Activated CD4-positive, alpha-beta T cell treated with anti-CD3 and anti-CD28 coated beads, Interleukin-2, amount 10 ng/mL, durations not matched to agents 24 days and 14 days (primary cell): ENCODE measurements at regions of chr2 and their contacts with region 1.

Region 1: DNA sequence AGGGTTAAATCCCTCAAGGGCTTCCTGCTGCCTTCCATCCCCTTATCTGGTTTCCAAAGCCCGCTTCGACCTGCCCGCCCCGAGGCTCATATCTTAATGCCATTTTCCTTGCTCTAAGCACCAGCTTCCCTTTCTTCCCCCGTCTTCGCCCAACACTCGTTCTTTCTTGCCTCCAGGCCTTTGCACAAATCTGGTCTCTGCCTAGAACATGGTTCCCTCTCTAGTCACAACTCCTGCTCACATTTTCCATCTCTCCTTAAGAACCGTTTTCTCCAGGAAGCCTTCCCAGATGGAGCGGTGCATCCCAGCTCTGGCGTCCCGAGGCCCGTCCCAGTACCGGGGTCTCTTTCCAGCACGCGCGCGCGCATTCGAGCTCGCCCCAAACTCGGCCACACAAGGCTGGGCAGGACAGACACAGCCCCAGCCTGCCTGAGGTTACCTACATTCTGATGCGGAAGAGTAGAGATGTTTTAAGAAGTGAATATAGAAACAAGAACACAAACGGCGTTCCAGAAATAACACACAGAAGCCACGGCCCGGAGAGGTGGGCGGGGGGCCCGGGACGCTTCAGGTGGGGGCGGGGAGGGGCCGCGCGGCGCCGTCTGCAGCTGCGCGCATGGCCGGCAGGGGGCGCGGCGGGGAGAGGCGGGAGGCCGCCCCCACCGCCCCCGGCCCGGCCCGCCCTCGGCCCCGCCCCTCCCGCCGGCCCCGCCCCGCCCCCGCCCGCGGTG is at the start of gene DGKD:
- DNase-seq: peak; percentile 89
- H3K4me3 Mint-ChIP-seq: peak within 1 kb of the TSS; percentile 87
- H3K27ac Mint-ChIP-seq: peak within 1 kb of the TSS; percentile 86
- H3K4me1 Mint-ChIP-seq: peaks cover 63% of the 10 kb centered on the region
- H3K27me3 Mint-ChIP-seq: no peaks in the 10 kb centered on the region
- total RNA-seq, gene DGKD: 49.1 and 52.8 TPM in 2 replicates

Region 2: DNA sequence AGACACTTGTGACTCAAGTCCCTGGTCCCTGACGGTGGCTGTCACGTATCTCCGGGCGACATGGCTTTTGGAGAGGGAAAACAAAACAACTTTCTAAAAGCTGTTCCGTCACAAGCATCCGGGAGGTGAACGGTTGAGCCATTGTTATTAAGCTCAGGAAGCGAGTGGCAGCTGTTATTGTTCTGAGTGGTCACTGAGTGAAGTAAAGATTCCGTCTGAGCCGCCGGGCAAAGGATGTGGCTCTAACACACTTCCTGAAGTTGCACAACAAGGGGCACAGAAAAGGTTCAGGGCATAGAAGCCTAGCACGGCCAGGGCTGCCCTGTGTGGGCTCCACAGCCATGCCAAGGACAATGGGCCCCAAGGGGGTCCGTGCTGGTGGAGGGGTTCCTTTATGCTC is 269.4 kb before region 1 on chr2:
- intact Hi-C with region 1: loop called (anchors 10 kb)
- DNase-seq: peak; percentile 83
- H3K4me3 Mint-ChIP-seq: peak overlapping the region; percentile 64
- H3K27ac Mint-ChIP-seq: peak overlapping the region; percentile 82
- H3K4me1 Mint-ChIP-seq: peaks cover 69% of the 10 kb centered on the region
- H3K27me3 Mint-ChIP-seq: no peaks in the 10 kb centered on the region

Region 3: DNA sequence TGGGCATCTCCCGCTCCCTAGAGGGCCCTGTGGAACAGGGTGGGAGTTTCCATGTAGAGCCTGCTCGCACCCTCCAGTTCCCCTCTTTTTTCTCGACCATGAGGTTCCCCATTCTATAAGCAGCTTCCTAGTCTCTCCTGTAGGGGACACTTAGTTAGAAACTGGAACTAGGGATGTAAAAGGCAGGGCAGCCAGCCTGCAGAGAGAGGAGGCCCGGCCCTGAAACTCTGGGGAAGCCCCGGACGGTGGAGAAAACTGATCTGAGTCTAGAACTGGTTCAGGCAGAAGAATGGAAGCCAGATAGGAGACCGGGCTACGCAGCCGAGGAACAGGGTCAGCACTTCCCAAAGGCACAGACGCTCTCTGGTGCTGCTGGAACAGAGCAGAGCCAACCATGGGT is 154.1 kb before region 1 on chr2:
- intact Hi-C with region 1: no loop called
- DNase-seq: no peak
- H3K4me3 Mint-ChIP-seq: no peak overlapping the region
- H3K27ac Mint-ChIP-seq: peak overlapping the region; percentile 63
- H3K4me1 Mint-ChIP-seq: no peaks in the 10 kb centered on the region
- H3K27me3 Mint-ChIP-seq: no peaks in the 10 kb centered on the region

Region 4: GRCh38 chr2:233267516-233268245 is 86.3 kb before region 1 on chr2:
- intact Hi-C with region 1: loop called (anchors 5 kb)
- DNase-seq: peak; percentile 95
- H3K4me3 Mint-ChIP-seq: peak overlapping the region; percentile 84
- H3K27ac Mint-ChIP-seq: peak overlapping the region; percentile 97
- H3K4me1 Mint-ChIP-seq: peaks cover 62% of the 10 kb centered on the region
- H3K27me3 Mint-ChIP-seq: no peaks in the 10 kb centered on the region

Region 5: GRCh38 chr2:233331536-233331935 is 22.4 kb before region 1 on chr2:
- intact Hi-C with region 1: loop called (anchors 2 kb)
- DNase-seq: peak; percentile 93
- H3K4me3 Mint-ChIP-seq: peak overlapping the region; percentile 58
- H3K27ac Mint-ChIP-seq: peak overlapping the region; percentile 94
- H3K4me1 Mint-ChIP-seq: peaks cover 37% of the 10 kb centered on the region
- H3K27me3 Mint-ChIP-seq: no peaks in the 10 kb centered on the region

Region 6: DNA sequence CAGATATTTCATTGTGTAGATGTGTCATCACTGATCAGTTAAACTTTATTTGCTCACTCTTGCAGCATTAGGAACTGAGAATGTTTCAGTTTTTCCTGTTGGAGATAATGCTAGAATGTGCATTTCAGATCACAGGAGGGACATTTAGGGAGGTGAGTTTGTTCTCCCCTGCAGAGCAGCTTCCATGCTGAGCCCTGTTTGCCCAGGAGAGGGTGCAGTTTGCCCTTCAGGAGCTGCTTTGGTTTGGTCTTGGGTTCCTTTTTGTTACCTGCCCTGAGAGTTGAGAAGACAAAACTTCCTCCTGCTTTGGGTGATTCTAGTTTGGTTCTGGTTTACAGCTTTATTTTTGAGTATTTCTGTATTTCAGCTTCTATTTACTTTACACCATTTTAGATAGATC is 50.3 kb after region 1 on chr2:
- intact Hi-C with region 1: loop called (anchors 5 kb)
- DNase-seq: peak; percentile 91
- H3K4me3 Mint-ChIP-seq: no peak overlapping the region
- H3K27ac Mint-ChIP-seq: peak overlapping the region; percentile 1
- H3K4me1 Mint-ChIP-seq: peaks cover 38% of the 10 kb centered on the region
- H3K27me3 Mint-ChIP-seq: no peaks in the 10 kb centered on the region

Region 7: GRCh38 chr2:233443468-233444183 is 89.7 kb after region 1 on chr2:
- intact Hi-C with region 1: loop called (anchors 1 kb)
- DNase-seq: peak; percentile 93
- H3K4me3 Mint-ChIP-seq: no peak overlapping the region
- H3K27ac Mint-ChIP-seq: no peak overlapping the region
- H3K4me1 Mint-ChIP-seq: peaks cover 12% of the 10 kb centered on the region
- H3K27me3 Mint-ChIP-seq: no peaks in the 10 kb centered on the region